Activated CD4-positive, alpha-beta T cell treated with anti-CD3 and anti-CD28 coated beads for 36 hours (primary cell): ENCODE measurements at regions of chrX and their contacts with region 1.

Region 1: DNA sequence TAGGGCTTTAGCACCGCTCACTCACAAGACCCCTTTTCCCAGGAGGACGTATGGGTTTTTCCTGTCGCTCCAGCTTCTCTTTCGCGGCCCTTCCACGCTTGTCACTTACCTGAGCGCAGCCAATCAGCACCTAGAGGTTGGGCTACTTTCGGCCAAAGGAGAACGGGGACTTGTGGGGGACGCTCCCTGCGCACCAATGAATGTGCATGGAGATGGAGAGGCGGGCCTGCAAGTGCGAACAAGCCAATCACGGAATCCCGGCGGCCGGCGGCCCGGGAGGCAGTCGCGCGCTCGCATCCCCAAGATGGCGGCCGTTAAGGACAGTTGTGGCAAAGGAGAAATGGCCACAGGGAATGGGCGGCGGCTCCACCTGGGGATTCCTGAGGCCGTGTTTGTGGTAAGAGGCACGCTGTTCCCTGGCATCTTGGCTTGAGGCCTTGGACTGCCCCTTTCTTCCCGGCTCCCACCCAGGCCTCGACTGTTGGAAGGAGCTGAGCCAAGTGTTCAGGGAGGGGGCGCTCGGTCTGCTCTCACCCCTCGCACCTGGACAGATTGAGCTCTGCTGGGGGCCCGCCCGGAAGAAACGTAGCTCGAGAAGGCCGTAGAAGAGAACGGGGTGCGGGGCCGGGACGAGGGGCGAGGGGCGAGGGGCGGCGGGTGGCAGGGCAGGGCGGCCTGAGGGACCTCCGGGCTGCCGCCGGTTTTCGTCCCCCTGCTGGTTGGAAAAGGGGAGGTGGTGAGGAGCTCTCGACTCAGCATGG is at the start of gene VBP1:
- DNase-seq: peak; percentile 92
- ATAC-seq: peak; percentile 99
- H3K4me3 Mint-ChIP-seq: peak within 1 kb of the TSS; percentile 98
- H3K27ac Mint-ChIP-seq: peak within 1 kb of the TSS; percentile 92
- H3K4me1 Mint-ChIP-seq: peaks cover 19% of the 10 kb centered on the region
- H3K27me3 Mint-ChIP-seq: no peaks in the 10 kb centered on the region
- total RNA-seq, gene VBP1: 72.3 to 86.4 TPM

Region 2: GRCh38 chrX:154980330-154981096 is 235.8 kb before region 1 on chrX:
- CTCF ChIA-PET with region 1: no interaction called
- POLR2A ChIA-PET with region 1: no interaction called
- intact Hi-C with region 1: loop called in 1 of 2 experiments (anchors 2 kb)
- DNase-seq: peak; percentile 85
- ATAC-seq: peak; percentile 100
- H3K4me3 Mint-ChIP-seq: peak overlapping the region; percentile 67
- H3K27ac Mint-ChIP-seq: peak overlapping the region; percentile 77
- H3K4me1 Mint-ChIP-seq: peaks cover 4% of the 10 kb centered on the region
- H3K27me3 Mint-ChIP-seq: no peaks in the 10 kb centered on the region

Region 3: DNA sequence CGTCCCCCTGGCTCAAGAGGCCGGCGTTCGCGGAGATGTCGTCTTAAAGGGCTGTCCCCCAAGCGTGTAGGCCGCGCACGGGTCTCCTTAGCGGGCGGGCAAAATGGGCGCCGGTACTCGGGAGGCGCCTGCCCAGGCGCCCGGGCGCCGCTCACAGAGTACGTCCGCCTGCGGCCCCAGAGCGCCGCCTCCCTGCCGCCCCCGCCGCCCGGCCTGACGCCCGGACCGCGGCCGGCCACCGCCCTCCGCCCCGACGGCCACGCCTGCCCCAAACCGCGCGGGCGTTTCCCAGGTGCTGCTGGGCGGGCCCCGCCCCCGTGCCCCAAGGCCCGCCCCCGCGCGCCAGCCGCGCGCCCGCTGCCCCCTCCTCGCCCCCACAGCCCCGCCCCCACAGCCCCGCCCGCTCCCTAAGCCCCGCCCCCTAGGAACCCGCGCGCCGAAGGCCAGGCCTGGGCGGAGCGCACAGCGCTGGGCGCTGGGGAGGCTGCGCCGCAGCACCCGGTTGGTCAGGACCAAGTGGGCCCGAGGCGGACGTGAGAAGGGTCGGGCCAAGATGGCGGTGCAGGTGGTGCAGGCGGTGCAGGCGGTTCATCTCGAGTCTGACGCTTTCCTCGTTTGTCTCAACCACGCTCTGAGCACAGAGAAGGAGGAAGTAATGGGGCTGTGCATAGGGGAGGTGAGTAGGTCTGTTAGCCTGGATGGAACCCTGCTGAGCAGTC is 145.2 kb before region 1 on chrX and contains the starts of genes BRCC3, CMC4 and MTCP1:
- CTCF ChIA-PET with region 1: no interaction called
- POLR2A ChIA-PET with region 1: interaction called, 8 read pairs
- intact Hi-C with region 1: loop called (anchors 1 to 10 kb)
- DNase-seq: peak; percentile 87
- ATAC-seq: peak; percentile 93
- H3K4me3 Mint-ChIP-seq: peak within 1 kb of the TSS; percentile 90
- H3K27ac Mint-ChIP-seq: peak within 1 kb of the TSS; percentile 93
- H3K4me1 Mint-ChIP-seq: peaks cover 53% of the 10 kb centered on the region
- H3K27me3 Mint-ChIP-seq: no peaks in the 10 kb centered on the region
- total RNA-seq, gene BRCC3: 28.1 to 30.3 TPM
- total RNA-seq, gene CMC4: 3.8 to 7.6 TPM
- total RNA-seq, gene MTCP1: 9.3 to 18.1 TPM

Region 4: DNA sequence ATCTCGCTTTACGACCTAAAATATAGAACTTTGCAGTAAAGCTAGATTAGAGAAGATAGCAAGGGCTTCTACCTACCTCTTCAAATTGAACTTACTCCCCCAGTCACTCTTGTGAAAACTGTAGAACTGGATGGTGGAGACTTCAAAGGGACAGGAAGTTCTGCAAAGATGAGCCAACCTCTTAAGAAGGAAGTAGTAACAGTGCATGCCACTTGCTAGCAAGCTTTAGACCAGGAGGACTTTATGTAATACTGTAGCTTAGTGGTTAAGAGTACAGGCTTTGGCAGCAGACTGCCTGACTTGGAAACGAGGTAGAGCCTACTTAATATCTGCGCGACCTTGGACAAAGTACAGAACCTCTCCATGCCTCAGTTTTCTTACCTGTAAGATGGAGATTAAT is 27.6 kb before region 1 on chrX:
- CTCF ChIA-PET with region 1: interaction called, 3 read pairs
- POLR2A ChIA-PET with region 1: no interaction called
- intact Hi-C with region 1: loop called in 1 of 2 experiments (anchors 1 kb)
- DNase-seq: no peak
- ATAC-seq: peak; percentile 82
- H3K4me3 Mint-ChIP-seq: no peak overlapping the region
- H3K27ac Mint-ChIP-seq: peak overlapping the region; percentile 76
- H3K4me1 Mint-ChIP-seq: peaks cover 41% of the 10 kb centered on the region
- H3K27me3 Mint-ChIP-seq: no peaks in the 10 kb centered on the region

Region 5: DNA sequence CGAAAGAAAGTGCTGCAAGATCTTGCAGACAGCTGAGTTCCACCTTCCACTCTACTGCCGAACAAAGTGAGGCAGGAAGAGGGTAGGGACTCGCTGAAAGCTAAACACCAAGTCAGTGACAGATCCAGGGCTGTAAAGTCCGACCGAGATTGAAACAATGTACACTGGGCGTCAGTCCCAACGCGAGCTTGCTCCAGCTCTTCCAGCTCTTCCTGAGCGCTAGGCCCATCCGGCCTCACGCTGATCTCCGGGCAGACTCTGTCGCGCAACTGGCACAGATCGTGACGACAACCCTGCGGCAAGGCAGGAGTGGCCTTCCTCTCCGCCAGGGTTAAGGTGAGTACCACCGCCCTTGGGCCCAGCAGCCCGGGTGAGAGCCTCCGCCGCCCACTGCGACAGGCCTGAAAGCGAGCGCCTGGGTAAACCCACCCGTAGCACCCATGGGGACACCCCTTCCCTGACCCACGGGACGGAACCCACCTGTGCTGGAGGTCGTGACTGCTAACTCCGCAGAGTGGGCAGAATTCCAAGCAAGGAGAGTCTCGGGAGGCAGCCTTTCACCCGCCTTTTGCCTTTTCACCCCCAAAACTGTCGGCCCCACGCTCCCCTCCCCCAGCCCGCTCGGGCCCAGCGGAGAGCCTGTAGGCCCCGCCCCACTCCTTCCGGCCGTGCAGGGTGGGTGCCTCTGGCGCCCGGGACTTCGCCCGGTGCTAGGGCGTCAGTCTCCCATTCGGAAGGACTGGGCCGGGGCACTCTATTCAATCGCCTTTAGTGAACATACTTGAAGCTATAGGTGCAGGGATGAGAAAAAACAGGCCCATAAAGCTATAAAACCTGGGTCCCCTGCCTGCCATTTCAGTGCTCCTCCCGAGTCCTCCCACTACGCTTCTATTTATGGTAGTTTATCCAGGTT is 396.2 kb after region 1 on chrX and contains the start of gene TMLHE:
- CTCF ChIA-PET with region 1: no interaction called
- POLR2A ChIA-PET with region 1: no interaction called
- intact Hi-C with region 1: loop called in 1 of 2 experiments (anchors 5 kb)
- DNase-seq: peak; percentile 82
- ATAC-seq: peak; percentile 97
- H3K4me3 Mint-ChIP-seq: peak within 1 kb of the TSS; percentile 90
- H3K27ac Mint-ChIP-seq: peak within 1 kb of the TSS; percentile 94
- H3K4me1 Mint-ChIP-seq: peaks cover 23% of the 10 kb centered on the region
- H3K27me3 Mint-ChIP-seq: no peaks in the 10 kb centered on the region
- total RNA-seq, gene TMLHE: 13.3 to 16.5 TPM